Heart right ventricle (tissue), 16 donors: ENCODE measurements at regions of chr19 and their contacts with region 1.

Region 1: GRCh38 chr19:1122972-1123363 is 19.2 kb downstream of the GPX4 start:
- DNase-seq: peak in 1 of 2 donors; percentile 63
- ATAC-seq: peak; percentile 23 to 78 (median 41)
- H3K4me3 ChIP-seq: no peak overlapping the region
- H3K27ac ChIP-seq: no peak overlapping the region
- H3K4me1 ChIP-seq: peaks cover 0 to 31% (median 0%) of the 10 kb centered on the region in 9 donors
- H3K27me3 ChIP-seq: no peaks in the 10 kb centered on the region
- CTCF ChIP-seq: no peak

Region 2: GRCh38 chr19:1173845-1174809 is 51.2 kb after region 1 on chr19 and contains the start of gene SBNO2:
- intact Hi-C with region 1: loop called in 1 of 10 experiments (anchors 10 kb)
- DNase-seq: peak; percentile 87 to 93
- ATAC-seq: peak; percentile 78 to 92 (median 87)
- H3K4me3 ChIP-seq: peak within 1 kb of the TSS; percentile 71 to 96 (median 80)
- H3K27ac ChIP-seq: peak within 1 kb of the TSS; percentile 70 to 98 (median 92)
- H3K4me1 ChIP-seq: peaks cover 0 to 74% (median 20%) of the 10 kb centered on the region in 9 donors
- H3K27me3 ChIP-seq: no peaks in the 10 kb centered on the region
- CTCF ChIP-seq: no peak
- total RNA-seq, gene SBNO2: 12.6 to 61.3 (median 16.1) TPM

Region 3: DNA sequence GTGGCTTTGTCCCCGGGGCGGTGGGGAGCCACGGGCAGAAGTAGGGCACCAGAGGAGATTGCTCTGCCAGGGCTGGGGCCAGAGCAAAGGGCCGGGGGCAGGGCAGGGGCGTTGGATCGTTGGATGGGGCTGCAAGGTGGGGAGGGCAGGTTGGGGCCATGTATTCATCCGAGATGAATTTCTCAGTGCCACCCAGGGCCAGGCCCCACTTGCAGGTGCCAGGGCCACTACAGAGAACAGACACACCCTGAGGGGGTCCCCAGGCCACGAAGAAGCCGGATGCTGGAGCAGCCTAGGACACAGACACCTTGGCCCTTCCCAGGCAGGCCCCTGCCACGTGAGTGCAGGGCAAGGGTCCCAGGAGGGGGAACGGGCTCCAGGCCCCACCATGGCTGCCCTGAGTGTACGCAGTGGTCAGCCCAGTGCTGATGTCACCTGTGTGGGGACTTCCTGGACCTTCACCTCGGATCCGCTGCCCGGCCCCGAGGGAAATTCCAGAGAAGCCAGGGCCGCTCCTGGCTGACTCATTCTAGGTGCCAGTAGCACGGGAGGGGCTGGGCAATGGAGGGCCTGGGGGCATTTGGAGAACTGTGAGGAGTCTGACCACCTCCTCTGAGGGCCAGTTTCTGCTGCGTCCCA is 60.7 kb after region 1 on chr19:
- intact Hi-C with region 1: loop called in 2 of 10 experiments (anchors 5 to 10 kb)
- DNase-seq: no peak
- ATAC-seq: no peak
- H3K4me3 ChIP-seq: no peak overlapping the region
- H3K27ac ChIP-seq: no peak overlapping the region
- H3K4me1 ChIP-seq: peaks cover 0 to 21% (median 5%) of the 10 kb centered on the region in 9 donors
- H3K27me3 ChIP-seq: peaks cover 0 to 4% (median 0%) of the 10 kb centered on the region in 7 donors
- CTCF ChIP-seq: no peak